ENCODE measurements at regions of chr11 and their contacts with region 1.

Region 1: DNA sequence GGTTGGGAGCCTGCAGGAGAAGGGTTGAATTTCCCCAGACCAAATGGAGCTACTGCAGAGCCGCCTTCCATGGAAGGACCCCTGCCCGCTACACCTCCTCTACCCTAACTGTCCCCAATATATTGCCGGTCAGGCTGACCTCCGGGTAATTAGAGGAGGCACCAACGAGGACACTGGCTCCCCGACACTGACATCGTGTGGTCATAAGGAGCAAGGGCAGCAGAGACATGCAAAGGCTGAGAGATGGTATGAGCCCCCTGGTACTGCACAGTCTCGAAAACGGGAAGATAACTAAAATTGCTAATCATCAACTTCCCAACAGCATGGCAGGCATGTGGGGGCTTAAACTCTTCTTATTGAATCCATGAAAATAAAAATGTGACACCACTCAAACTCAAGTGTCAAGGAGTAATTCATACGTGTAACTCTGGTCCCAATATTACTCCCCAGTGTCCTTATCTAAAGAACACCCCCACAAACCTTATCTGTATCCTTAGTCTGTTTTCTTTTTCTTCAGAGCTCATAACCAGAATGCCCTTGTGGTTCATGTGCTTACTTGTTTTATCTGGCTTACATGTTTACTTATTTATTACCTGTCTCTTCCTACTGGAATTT is 4.4 kb downstream of the CAVIN3 start:
- DNase-seq: peak; percentile 79
- H3K4me3 ChIP-seq: no peak overlapping the region
- H3K27ac ChIP-seq: no peak overlapping the region
- H3K4me1 ChIP-seq: no peaks in the 10 kb centered on the region; a peak in 1 of 4 replicates
- H3K27me3 ChIP-seq: peaks cover 5% of the 10 kb centered on the region; the same call in 1 of the 2 replicates
- CTCF ChIP-seq: peak; percentile 80
- EP300 ChIP-seq: no peak
- RAD21 ChIP-seq: peak; percentile 77

Region 2: DNA sequence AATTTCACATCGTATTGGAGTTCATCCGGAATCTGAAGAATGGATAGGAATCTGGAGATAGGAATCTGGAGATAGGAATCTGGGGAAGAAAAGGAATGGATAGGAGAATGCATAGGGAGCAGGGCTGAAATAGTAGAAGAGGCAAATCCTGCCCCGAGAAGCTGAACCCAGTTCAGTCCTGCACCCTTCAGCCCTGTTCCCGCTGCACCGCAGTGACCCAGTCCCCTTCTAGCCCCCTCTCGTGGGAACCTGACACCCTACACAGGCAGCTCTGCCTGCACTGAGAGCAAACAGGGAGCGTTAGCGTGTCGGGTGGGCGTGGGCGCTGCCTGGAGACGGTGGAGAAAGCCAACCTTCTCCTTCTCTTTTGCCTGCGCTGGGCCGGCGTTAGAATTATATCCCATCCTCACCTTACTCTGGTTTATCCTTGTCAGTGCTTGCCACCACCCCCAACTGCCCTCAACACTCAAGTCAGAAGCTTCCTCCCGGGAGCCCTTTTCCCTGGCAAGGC is 57.3 kb before region 1 on chr11:
- CTCF ChIA-PET with region 1: interaction called, 12 read pairs
- POLR2A ChIA-PET with region 1: no interaction called
- DNase-seq: no peak
- H3K4me3 ChIP-seq: peak overlapping the region in 1 of 2 experiments; percentile 4; a peak in 1 of 4 replicates
- H3K27ac ChIP-seq: no peak overlapping the region
- H3K4me1 ChIP-seq: peaks cover 0 to 10% of the 10 kb centered on the region in 2 experiments; a peak in 1 of 4 replicates
- H3K27me3 ChIP-seq: peaks cover 63% of the 10 kb centered on the region
- CTCF ChIP-seq: no peak
- EP300 ChIP-seq: no peak
- RAD21 ChIP-seq: no peak

Region 3: GRCh38 chr11:6298605-6299004 is 17.3 kb before region 1 on chr11:
- CTCF ChIA-PET with region 1: interaction called, 21 read pairs
- POLR2A ChIA-PET with region 1: no interaction called
- DNase-seq: peak; percentile 27
- H3K4me3 ChIP-seq: no peak overlapping the region
- H3K27ac ChIP-seq: no peak overlapping the region
- H3K4me1 ChIP-seq: no peaks in the 10 kb centered on the region
- H3K27me3 ChIP-seq: peaks cover 17% of the 10 kb centered on the region; the same call in 1 of the 2 replicates
- CTCF ChIP-seq: peak; percentile 58
- EP300 ChIP-seq: no peak
- RAD21 ChIP-seq: peak; percentile 26; the same call in 1 of the 2 replicates

Region 4: DNA sequence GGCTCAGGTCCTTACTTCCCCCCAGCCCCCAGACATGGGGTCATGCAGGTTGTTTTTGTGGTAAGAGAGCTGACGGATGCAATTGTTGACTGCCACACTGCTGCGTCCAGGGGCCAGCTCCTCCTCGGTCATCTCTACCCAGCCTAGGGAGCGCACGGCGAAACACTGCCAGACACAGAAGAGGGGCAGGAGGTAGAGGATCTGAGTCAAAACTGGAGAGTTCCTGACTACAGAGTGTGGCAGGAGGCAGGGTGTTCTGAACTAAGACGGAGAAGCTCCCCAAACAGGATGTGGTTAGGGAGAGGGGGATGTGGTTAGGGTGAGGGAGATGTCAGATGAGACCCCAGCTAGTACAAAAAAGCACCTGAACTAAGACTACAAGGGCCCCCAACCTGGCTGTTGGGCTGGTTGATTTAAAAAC is 86.7 kb after region 1 on chr11:
- CTCF ChIA-PET with region 1: no interaction called
- POLR2A ChIA-PET with region 1: no interaction called
- DNase-seq: no peak
- H3K4me3 ChIP-seq: no peak overlapping the region
- H3K27ac ChIP-seq: no peak overlapping the region
- H3K4me1 ChIP-seq: peaks cover 7 to 13% of the 10 kb centered on the region in 2 experiments; a peak in 2 of 4 replicates
- H3K27me3 ChIP-seq: no peaks in the 10 kb centered on the region
- CTCF ChIP-seq: no peak
- EP300 ChIP-seq: no peak
- RAD21 ChIP-seq: no peak

Region 5: DNA sequence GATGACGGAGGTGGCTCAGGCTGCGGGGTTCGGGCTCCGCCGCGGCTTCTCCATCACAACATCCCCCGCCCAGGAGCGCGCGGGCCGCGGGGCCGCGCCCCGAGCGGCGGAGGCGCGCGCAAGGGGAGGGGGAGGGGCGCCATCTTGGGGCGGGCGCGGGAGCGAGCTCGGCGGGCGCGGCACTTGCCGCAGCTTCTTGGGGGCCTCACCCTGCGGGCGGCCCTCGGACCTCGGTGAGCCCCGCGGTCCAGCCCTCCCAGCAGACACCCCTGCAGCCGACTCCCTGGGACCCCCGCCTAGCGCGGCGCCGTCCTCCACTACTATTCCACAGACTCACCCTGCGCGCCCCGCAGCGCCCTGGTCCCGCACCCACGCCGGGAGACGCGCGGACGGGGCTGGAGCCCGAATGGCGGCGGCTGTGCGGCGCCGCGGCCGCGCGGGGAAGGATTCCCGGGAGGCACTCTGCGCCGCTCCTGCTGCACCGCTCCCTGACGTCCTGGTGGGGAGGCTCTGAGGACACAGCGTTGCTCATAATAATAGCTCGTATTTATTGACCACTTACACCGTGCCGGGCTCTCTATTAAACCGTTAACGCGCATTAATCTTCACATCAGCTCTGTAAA is 103.2 kb after region 1 on chr11 and contains the start of gene APBB1:
- CTCF ChIA-PET with region 1: no interaction called
- POLR2A ChIA-PET with region 1: no interaction called
- DNase-seq: peak; percentile 96
- H3K4me3 ChIP-seq: peak within 1 kb of the TSS; percentile 74 to 77
- H3K27ac ChIP-seq: peak within 1 kb of the TSS in 1 of 2 experiments; percentile 80; a peak in 2 of 4 replicates
- H3K4me1 ChIP-seq: peaks cover 0 to 11% of the 10 kb centered on the region in 2 experiments; a peak in 1 of 4 replicates
- H3K27me3 ChIP-seq: no peaks in the 10 kb centered on the region
- CTCF ChIP-seq: peak; percentile 19; the same call in 1 of the 2 replicates
- EP300 ChIP-seq: no peak
- RAD21 ChIP-seq: peak; percentile 6; the same call in 1 of the 2 replicates
- polyA plus RNA-seq, gene APBB1: 32.9 and 35.9 TPM in 2 replicates

Region 6: DNA sequence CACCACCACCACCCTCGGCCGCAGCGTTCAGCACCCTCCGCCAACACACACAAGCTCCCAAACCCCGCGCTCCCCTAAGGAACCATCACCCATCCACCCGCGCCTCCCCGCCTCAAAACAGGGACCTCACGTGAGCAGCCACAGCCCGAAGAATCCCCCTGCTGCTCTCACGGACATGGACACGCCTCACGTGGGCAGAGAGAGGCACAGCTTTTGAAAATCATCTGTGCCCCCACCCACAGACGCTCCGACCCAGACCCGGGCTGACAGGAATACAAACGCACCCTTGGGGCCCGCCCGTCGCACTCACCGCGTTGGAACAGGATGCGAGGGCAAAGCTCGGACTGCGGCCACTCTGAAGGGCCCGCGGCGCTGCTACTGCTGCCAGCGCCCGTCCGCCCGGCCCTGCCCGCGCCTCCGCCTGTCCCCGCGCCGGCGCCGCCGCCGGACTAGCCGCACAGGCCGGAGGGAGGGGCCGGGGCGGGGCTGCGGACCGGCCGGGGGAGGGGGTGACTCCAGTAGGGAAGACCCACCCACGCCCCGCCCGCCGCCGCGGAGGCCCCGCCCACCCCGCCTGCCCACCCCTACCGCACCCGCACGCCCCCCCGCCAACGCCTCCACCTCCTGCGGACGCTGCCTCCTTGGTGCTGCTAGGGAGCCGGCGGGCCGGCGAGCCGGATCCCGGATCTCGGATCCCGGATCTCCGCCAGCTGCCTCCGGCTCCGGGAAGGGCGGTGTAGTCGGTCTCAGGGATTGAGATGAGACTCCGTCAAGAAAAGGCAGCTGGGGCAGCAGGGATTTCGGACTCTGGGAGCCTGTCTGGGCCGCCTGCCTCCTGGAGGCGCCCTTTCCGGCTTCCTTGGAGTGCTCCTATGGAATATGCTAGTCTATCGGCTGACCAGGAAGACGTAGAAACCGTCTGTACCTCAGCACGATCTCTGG is 157.8 kb after region 1 on chr11 and contains the start of gene TRIM3:
- CTCF ChIA-PET with region 1: no interaction called
- POLR2A ChIA-PET with region 1: no interaction called
- DNase-seq: peak; percentile 100
- H3K4me3 ChIP-seq: peak within 1 kb of the TSS; percentile 63 to 96
- H3K27ac ChIP-seq: peak within 1 kb of the TSS; percentile 93 to 96
- H3K4me1 ChIP-seq: peaks cover 7 to 22% of the 10 kb centered on the region in 2 experiments; a peak in 2 of 4 replicates
- H3K27me3 ChIP-seq: no peaks in the 10 kb centered on the region
- CTCF ChIP-seq: peak; percentile 56
- EP300 ChIP-seq: no peak
- RAD21 ChIP-seq: no peak
- polyA plus RNA-seq, gene TRIM3: 22.8 and 26.6 TPM in 2 replicates

Measured in SK-N-SH (cell line).